ENCODE measurements at regions of chr15 and their contacts with region 1.

Region 1: GRCh38 chr15:44584162-44584749 is 47.3 kb downstream of the EIF3J start:
- DNase-seq: peak; percentile 31
- ATAC-seq: peak; percentile 82
- H3K4me3 Mint-ChIP-seq: no peak overlapping the region
- H3K27ac Mint-ChIP-seq: no peak overlapping the region
- H3K4me1 Mint-ChIP-seq: peaks cover 2% of the 10 kb centered on the region
- H3K27me3 Mint-ChIP-seq: no peaks in the 10 kb centered on the region
- CTCF ChIP-seq: no peak

Region 2: DNA sequence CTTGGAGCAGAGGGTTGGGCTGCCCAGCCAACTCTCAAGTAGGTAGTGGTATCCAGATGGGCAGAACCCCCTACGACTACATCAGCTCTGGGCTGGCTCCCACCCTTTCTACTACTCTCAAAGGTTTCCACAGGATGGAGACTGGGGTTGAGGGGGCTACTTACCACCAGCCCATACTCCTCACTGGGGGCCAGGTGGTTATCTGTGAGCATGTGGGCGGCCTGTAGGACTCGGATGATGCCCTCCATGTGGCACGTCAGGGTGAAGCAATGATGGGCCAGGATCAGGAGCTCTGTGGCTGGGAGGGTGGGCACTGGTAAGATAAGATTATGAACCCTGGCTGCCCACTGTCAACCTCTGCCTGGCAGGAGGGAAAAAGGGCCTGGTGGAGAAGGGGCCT is 13.9 kb before region 1 on chr15:
- CTCF ChIA-PET with region 1: interaction called, 11 read pairs
- POLR2A ChIA-PET with region 1: no interaction called
- intact Hi-C with region 1: no loop called
- DNase-seq: no peak
- ATAC-seq: no peak
- H3K4me3 Mint-ChIP-seq: no peak overlapping the region
- H3K27ac Mint-ChIP-seq: no peak overlapping the region
- H3K4me1 Mint-ChIP-seq: no peaks in the 10 kb centered on the region
- H3K27me3 Mint-ChIP-seq: no peaks in the 10 kb centered on the region
- CTCF ChIP-seq: no peak

Region 3: DNA sequence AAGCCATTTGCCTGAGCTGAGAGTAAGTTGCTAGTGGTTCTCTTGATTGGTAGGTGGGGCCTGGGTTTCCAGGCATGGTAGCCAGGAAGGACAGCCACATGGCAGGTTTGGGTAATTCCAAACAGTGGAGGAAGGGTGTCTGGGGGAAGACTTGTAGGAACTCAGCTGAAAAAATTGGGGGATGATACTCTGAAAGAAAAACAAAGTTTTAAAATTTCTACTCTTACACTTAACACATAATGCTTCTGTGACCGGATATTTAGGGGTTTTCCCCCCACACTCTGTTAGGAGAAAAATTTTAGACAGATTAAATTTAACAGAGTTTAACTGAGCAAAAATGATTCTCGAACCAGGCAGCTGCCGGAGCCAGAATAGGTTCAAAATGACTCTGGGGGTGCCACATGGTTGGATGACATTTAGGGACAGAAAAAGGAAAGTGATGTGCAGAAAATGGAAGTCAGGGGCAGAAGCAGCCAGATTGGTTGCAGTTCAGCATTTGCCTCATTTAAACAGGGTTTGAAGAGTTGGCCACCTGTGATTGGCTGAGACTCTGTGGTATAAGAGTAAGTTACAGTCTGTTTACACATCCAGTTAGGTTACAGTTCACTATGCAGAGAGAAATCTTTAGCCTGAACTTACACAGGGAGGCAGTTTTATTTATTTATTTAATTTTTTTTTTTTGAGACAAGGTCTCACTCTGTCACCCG is 135.2 kb after region 1 on chr15:
- CTCF ChIA-PET with region 1: no interaction called
- POLR2A ChIA-PET with region 1: no interaction called
- intact Hi-C with region 1: no loop called
- DNase-seq: no peak
- ATAC-seq: peak; percentile 64
- H3K4me3 Mint-ChIP-seq: peak overlapping the region; percentile 72
- H3K27ac Mint-ChIP-seq: peak overlapping the region; percentile 98
- H3K4me1 Mint-ChIP-seq: peaks cover 93% of the 10 kb centered on the region
- H3K27me3 Mint-ChIP-seq: no peaks in the 10 kb centered on the region
- CTCF ChIP-seq: no peak

Region 4: DNA sequence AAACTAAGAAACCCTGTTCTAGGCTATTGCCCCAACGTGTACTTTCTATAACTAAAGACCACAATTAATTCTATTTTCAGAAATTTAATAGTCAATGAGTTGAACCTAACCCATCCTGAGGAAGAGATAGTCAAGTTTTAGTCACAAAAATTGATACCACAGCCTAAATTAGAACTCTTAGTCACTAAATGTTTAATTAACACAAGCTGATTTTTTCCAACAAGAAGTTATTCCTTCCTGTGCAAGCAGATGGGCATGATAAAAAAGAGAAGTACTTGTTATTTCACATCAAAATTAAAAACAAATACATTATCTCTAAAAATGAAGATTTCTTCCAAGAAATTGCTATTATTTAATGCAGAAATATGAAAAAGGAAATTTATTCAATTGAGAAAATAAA is 333.9 kb after region 1 on chr15:
- CTCF ChIA-PET with region 1: no interaction called
- POLR2A ChIA-PET with region 1: no interaction called
- intact Hi-C with region 1: loop called (anchors 5 kb)
- DNase-seq: no peak
- ATAC-seq: no peak
- H3K4me3 Mint-ChIP-seq: no peak overlapping the region
- H3K27ac Mint-ChIP-seq: no peak overlapping the region
- H3K4me1 Mint-ChIP-seq: no peaks in the 10 kb centered on the region
- H3K27me3 Mint-ChIP-seq: no peaks in the 10 kb centered on the region
- CTCF ChIP-seq: no peak

Region 5: DNA sequence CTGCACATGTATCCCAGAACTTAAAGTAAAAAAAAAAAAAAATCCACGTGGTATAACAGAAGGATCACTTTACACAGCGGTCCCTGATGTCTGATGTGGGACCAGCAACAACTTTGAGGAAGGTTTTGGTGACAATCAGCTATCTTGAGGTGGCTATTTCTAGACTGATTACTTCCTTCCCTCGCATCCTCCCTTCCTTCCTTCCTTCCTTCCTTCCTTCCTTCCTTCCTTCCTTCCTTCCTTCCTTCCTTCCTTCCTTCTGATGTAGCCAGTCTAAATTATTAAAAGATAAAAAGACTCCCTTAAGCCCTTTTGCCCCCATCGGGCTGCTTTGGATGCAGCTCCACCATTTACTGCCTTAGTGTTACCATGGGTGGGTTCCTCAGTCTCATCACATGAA is 453.7 kb after region 1 on chr15:
- CTCF ChIA-PET with region 1: no interaction called
- POLR2A ChIA-PET with region 1: no interaction called
- intact Hi-C with region 1: loop called (anchors 5 kb)
- DNase-seq: no peak
- ATAC-seq: no peak
- H3K4me3 Mint-ChIP-seq: no peak overlapping the region
- H3K27ac Mint-ChIP-seq: peak overlapping the region; percentile 31
- H3K4me1 Mint-ChIP-seq: peaks cover 35% of the 10 kb centered on the region
- H3K27me3 Mint-ChIP-seq: no peaks in the 10 kb centered on the region
- CTCF ChIP-seq: no peak

Measured in activated B cell treated with CpG ODN at 0.5 μM for 24 hours (primary cell).